ENCODE measurements at regions of chr1 and their contacts with region 1.

Region 1: GRCh38 chr1:155978325-155978972 is at the start of gene ARHGEF2:
- DNase-seq: peak; percentile 90
- CTCF ChIP-seq: peak; percentile 33

Region 2: GRCh38 chr1:155831279-155831976 is 147.0 kb before region 1 on chr1:
- CTCF ChIA-PET with region 1: no interaction called
- POLR2A ChIA-PET with region 1: no interaction called
- DNase-seq: no peak
- CTCF ChIP-seq: no peak

Region 3: DNA sequence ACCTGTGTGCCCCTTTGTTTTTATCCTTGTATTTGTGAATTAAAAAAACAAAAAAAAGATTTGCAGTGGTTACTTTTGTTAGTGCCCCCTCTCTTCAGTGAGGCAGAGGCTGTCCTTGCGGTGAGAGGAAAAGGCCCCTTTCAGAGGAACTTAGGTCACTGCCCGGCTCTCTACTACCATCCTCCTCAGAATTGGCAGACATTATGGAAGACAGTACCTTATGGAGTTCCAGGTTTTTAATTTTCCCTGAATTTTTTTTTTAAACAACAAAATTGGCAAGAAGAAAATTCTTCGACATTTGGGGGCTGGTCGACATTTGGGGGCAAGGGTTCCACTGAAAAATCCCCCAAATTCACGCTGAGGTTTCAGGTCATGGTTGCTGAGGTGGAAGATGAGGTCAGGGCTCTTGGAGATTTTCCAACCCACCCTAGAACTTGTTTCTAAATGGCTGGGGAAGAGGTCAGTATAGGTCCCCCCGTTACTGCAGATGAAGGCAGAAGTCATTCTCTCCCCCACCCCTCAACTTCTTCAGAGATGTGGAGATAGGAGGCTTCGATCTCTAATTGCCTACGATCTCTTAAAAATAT is 31.7 kb before region 1 on chr1:
- CTCF ChIA-PET with region 1: interaction called, 36 read pairs
- POLR2A ChIA-PET with region 1: interaction called, 4 read pairs
- DNase-seq: no peak
- CTCF ChIP-seq: no peak

Region 4: DNA sequence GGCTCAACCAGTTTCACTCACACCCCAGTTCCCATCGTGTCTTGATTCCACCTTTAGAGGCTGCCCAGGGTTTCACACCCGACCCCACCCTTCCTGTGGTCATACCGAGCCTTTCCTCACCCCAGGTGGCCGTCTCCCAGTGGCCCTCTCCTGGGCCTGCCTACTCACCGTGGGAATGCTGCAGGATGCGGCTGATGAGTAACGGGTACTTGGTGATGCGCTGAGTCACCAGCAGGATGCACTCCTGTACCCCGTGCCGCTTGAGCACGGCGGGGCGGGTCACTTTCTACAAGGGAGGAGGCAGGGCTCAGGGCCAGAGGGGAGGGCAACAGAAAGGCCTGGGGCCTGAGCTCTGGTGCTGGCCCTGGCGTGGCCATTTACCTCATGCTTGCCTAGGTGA is 16.5 kb before region 1 on chr1:
- CTCF ChIA-PET with region 1: interaction called, 41 read pairs
- POLR2A ChIA-PET with region 1: no interaction called
- DNase-seq: no peak
- CTCF ChIP-seq: peak; percentile 28

Region 5: DNA sequence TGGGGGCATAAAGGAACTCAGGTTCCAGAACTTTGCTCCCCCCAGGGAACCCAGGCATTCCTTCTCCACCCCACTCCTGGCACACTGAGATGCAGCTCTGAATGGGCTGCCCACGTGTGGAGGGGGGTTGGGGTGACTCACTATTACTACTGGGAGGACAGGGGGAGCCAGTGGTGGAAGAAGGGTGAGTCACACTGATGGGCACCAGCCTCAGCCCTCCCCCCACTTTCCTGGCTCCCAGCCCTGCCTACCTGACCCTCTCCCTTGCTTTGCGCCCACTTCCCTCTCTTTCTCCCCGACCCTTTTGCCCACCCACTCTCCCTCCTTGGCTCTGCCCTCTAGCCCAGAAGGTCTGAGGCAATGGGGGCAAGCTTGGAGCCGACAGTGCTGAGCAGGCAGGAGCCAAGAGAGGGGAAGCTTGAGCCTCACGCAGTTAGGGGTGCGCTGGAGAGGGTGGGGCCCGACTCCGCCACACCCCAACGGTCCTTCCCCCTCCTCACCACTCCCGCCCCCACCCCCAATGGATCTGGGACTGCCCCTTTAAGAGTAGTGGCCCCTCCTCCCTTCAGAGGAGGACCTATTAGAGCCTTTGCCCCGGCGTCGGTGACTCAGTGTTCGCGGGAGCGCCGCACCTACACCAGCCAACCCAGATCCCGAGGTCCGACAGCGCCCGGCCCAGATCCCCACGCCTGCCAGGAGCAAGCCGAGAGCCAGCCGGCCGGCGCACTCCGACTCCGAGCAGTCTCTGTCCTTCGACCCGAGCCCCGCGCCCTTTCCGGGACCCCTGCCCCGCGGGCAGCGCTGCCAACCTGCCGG is 135.9 kb after region 1 on chr1 and contains the start of gene LMNA:
- CTCF ChIA-PET with region 1: no interaction called
- POLR2A ChIA-PET with region 1: no interaction called
- DNase-seq: peak; percentile 83
- CTCF ChIP-seq: no peak